B cell (primary cell): ENCODE measurements at regions of chr7 and their contacts with region 1.

Region 1: GRCh38 chr7:44059219-44060090 is 5.9 kb downstream of the PGAM2 start:
- DNase-seq: peak; percentile 83
- ATAC-seq: peak; percentile 89
- H3K4me3 ChIP-seq: peak overlapping the region in 3 of 5 experiments; percentile 7 to 15 (median 12)
- H3K4me3 Mint-ChIP-seq: peak overlapping the region; percentile 88
- H3K27ac ChIP-seq: peak overlapping the region; percentile 93 to 99
- H3K27ac Mint-ChIP-seq: peak overlapping the region; percentile 100
- H3K4me1 ChIP-seq: peaks cover 73 to 93% of the 10 kb centered on the region in 2 donors
- H3K4me1 Mint-ChIP-seq: peaks cover 75% of the 10 kb centered on the region
- H3K27me3 ChIP-seq: no peaks in the 10 kb centered on the region
- H3K27me3 Mint-ChIP-seq: no peaks in the 10 kb centered on the region
- CTCF ChIP-seq: no peak

Region 2: DNA sequence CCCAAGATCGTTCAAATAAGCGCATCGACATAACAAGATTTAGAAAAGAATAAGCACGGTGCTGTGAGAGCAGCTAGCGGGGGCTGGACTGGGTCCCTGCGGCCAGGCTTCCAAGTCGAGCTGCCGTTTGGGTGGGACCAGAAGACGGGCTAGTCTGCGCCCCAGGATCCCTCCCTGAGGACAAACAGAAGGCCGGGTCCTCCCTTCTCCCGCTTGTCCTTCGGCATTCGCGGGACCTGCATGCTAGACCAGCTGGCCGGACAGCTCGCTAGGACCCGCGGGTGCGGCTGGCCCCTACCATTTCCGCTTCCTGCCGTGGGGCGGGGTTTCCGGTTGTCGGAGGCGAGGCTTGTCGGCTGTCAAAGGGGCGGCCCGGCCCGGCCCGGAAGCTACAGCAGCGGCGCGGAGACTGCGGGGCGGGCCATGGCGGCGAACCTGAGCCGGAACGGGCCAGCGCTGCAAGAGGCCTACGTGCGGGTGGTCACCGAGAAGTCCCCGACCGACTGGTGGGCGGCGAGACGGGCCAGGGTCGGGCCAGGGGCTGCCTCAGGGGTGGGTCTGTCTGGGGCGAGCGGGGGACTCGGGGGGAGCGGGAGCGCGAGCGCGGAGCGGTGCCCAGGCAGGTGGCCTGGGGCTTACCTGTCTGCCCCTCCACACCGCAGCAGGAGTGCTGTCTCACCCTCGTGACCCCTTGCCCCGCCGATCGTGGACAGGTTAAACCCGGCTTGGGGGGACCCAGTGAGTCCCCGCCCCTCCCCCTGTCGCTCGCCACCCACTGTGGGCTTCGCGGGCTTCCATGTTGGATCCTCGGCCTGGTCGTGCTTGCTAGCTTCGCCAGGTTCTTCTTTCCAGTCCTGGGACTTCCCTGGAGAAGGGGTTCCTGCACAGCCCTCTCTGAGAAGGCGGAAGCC is 14.9 kb before region 1 on chr7 and contains the start of gene DBNL:
- CTCF ChIA-PET with region 1: interaction called, 17 read pairs
- POLR2A ChIA-PET with region 1: interaction called, 18 read pairs
- intact Hi-C with region 1: loop called (anchors 1 kb)
- DNase-seq: peak; percentile 89
- ATAC-seq: peak; percentile 42
- H3K4me3 ChIP-seq: peak within 1 kb of the TSS; percentile 86 to 96 (median 91)
- H3K4me3 Mint-ChIP-seq: peak within 1 kb of the TSS; percentile 98
- H3K27ac ChIP-seq: peak within 1 kb of the TSS; percentile 83 to 96
- H3K27ac Mint-ChIP-seq: peak within 1 kb of the TSS; percentile 99
- H3K4me1 ChIP-seq: peaks cover 51 to 60% of the 10 kb centered on the region in 2 donors
- H3K4me1 Mint-ChIP-seq: peaks cover 58% of the 10 kb centered on the region
- H3K27me3 ChIP-seq: no peaks in the 10 kb centered on the region
- H3K27me3 Mint-ChIP-seq: no peaks in the 10 kb centered on the region
- CTCF ChIP-seq: no peak
- total RNA-seq, gene DBNL: 311 and 335 TPM in 2 replicates

Region 3: DNA sequence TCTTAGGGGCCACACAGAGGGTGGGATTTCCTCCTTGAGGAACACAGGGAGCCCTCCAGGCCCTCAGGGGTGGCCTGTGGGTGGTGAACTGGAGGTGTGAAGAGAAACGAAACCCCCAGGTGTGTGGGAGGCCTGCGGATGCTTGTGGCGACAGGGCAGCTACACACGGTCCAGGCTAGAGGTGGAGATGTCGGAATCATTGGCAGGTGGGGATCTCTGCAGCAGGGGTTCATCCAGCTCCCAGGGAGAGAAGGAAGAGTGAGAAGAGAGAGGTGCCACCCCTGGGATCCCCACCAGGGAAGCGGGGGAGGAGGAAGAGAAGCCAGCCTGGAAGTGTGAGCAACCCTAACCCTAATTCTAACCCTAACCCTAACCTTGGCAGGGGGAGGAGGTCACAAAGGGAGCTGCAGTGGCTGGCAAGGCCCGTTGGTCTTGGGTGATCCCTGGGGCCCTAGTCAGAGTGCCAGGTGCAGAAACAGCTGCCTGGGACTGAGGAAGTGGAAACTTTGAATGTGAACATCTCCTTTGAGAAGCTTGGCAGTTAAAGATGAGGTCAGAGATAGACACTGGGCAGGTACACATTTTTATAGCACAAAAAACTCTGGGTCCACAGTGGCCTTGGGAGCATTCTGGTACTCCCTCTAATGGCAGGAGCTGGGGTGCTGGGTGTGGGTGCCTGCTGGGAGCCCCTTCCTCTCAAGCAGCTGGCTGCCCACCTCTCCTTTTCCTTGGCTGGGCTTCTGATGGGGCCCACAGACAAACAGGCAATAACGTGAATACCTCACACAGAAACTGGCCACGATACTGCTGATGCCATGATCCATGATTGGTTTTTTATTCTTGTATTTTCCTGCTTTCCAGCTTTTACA is 37.8 kb after region 1 on chr7:
- CTCF ChIA-PET with region 1: no interaction called
- POLR2A ChIA-PET with region 1: no interaction called
- intact Hi-C with region 1: loop called (anchors 1 kb)
- DNase-seq: peak; percentile 80
- ATAC-seq: peak; percentile 87
- H3K4me3 ChIP-seq: no peak overlapping the region
- H3K4me3 Mint-ChIP-seq: peak overlapping the region; percentile 57
- H3K27ac ChIP-seq: peak overlapping the region; percentile 78 to 84
- H3K27ac Mint-ChIP-seq: peak overlapping the region; percentile 87
- H3K4me1 ChIP-seq: peaks cover 40 to 83% of the 10 kb centered on the region in 2 donors
- H3K4me1 Mint-ChIP-seq: peaks cover 77% of the 10 kb centered on the region
- H3K27me3 ChIP-seq: no peaks in the 10 kb centered on the region
- H3K27me3 Mint-ChIP-seq: no peaks in the 10 kb centered on the region
- CTCF ChIP-seq: no peak